IMR-90 (cell line): ENCODE measurements at regions of chr11 and their contacts with region 1.

Region 1: DNA sequence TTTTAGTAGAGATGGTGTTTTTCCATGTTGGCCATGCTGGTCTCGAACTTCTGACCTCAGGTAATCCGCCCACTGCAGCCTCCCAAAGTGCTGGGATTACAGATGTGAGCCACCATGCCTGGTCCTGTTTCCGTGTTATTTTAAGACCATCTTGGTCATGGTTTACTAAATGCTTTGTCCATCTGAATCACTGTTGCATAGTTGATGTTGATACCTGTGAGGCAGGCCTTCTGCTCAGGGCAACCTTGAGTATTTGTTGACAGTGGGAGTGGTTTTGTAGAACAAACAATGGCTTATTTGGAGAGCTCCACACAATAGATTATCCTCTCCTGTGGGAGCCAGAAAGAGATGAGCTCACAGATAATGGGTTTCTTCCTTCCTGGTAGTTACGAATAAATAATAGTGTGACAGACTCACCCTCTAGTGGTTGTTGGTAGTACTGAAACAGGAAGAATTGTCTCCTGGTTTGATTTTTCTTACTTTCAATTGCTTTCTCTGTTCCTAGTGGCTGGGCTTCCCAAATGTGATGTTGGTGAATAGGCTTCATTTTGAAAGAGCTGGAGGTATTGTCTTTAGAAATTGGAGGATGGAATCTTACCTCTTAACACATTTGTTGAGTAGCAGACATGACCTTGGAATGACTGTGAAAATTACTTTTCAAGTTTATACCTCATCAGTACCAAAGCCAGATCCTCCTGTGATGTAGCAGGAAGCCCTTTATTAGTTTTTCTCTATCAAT is 39.0 kb downstream of the CTNND1 start:
- DNase-seq: peak; percentile 74
- ATAC-seq: peak; percentile 80
- H3K4me3 ChIP-seq: no peak overlapping the region
- H3K27ac ChIP-seq: peak overlapping the region; percentile 13; the same call in 1 of the 2 replicates
- H3K4me1 ChIP-seq: peaks cover 3% of the 10 kb centered on the region
- H3K27me3 ChIP-seq: no peaks in the 10 kb centered on the region
- CTCF ChIP-seq: peak; percentile 83
- POLR2A ChIP-seq: no peak
- RAD21 ChIP-seq: peak; percentile 87

Region 2: GRCh38 chr11:57567515-57568329 is 232.9 kb before region 1 on chr11 and contains the start of gene UBE2L6:
- CTCF ChIA-PET with region 1: no interaction called
- POLR2A ChIA-PET with region 1: no interaction called
- dilution Hi-C with region 1: no loop called
- in situ Hi-C with region 1: no loop called
- intact Hi-C with region 1: loop called (anchors 5 kb)
- DNase-seq: no peak
- ATAC-seq: peak; percentile 81
- H3K4me3 ChIP-seq: peak within 1 kb of the TSS; percentile 80
- H3K27ac ChIP-seq: peak within 1 kb of the TSS; percentile 83
- H3K4me1 ChIP-seq: peaks cover 11% of the 10 kb centered on the region
- H3K27me3 ChIP-seq: no peaks in the 10 kb centered on the region
- CTCF ChIP-seq: peak; percentile 39
- POLR2A ChIP-seq: no peak
- RAD21 ChIP-seq: no peak
- total RNA-seq, gene UBE2L6: 34.4 and 37.5 TPM in 2 replicates

Region 3: GRCh38 chr11:57746920-57747319 is 53.7 kb before region 1 on chr11:
- CTCF ChIA-PET with region 1: interaction called, 7 read pairs
- POLR2A ChIA-PET with region 1: interaction called, 3 read pairs
- dilution Hi-C with region 1: no loop called
- in situ Hi-C with region 1: loop called (anchors 5 kb)
- intact Hi-C with region 1: no loop called
- DNase-seq: no peak
- ATAC-seq: no peak
- H3K4me3 ChIP-seq: no peak overlapping the region
- H3K27ac ChIP-seq: no peak overlapping the region
- H3K4me1 ChIP-seq: peaks cover 2% of the 10 kb centered on the region; the same call in 1 of the 2 replicates
- H3K27me3 ChIP-seq: no peaks in the 10 kb centered on the region
- CTCF ChIP-seq: no peak
- POLR2A ChIP-seq: no peak
- RAD21 ChIP-seq: no peak

Region 4: GRCh38 chr11:57761301-57762234 is 39.0 kb before region 1 on chr11 and contains the start of gene CTNND1:
- CTCF ChIA-PET with region 1: interaction called, 10 read pairs
- POLR2A ChIA-PET with region 1: interaction called, 6 read pairs
- dilution Hi-C with region 1: no loop called
- in situ Hi-C with region 1: no loop called
- intact Hi-C with region 1: loop called (anchors 1 kb)
- DNase-seq: peak; percentile 98
- ATAC-seq: peak; percentile 96
- H3K4me3 ChIP-seq: peak within 1 kb of the TSS; percentile 99
- H3K27ac ChIP-seq: peak within 1 kb of the TSS; percentile 100
- H3K4me1 ChIP-seq: peaks cover 8% of the 10 kb centered on the region
- H3K27me3 ChIP-seq: no peaks in the 10 kb centered on the region
- CTCF ChIP-seq: no peak
- POLR2A ChIP-seq: peak; percentile 84; the same call in 1 of the 2 replicates
- RAD21 ChIP-seq: no peak
- total RNA-seq, gene CTNND1: 193 and 229 TPM in 2 replicates

Region 5: DNA sequence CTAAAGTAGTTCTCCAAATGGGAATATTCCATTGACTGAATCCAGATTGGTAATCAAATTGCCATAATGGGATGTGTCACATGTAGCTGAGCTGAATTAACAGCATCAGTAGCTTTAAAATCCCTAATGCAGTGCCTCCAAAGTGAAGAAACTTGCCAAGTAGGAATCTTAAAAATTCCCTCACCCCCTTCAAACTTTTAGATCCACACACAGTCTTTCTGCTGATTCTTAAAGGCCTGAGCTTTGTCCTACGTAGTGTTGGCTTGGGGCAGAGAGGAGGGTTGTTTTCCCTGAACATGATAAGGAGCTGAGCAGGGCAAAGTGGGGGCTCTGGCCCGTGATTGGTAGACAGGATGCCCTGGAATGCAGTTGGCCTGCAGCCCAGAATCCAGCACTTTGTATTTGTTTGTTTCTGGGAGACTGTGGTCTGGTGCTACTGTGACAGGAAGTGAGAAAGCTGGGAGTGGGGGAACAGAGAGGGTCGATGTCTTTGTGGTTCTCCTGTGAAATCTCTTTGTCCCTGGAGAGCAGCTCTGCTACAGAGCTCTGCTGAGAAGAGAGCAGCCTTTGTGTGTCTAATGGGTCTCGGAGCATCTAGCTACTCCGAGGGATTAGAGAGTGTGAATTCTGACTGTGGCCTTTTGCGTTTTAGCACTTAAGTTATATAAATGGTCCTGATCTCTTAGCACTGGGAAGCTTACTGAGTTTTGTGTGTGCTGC is 22.1 kb before region 1 on chr11:
- CTCF ChIA-PET with region 1: interaction called, 11 read pairs
- POLR2A ChIA-PET with region 1: no interaction called
- dilution Hi-C with region 1: no loop called
- in situ Hi-C with region 1: no loop called
- intact Hi-C with region 1: no loop called
- DNase-seq: peak; percentile 98
- ATAC-seq: peak; percentile 88
- H3K4me3 ChIP-seq: peak overlapping the region; percentile 21; the same call in 1 of the 2 replicates
- H3K27ac ChIP-seq: peak overlapping the region; percentile 88
- H3K4me1 ChIP-seq: peaks cover 31% of the 10 kb centered on the region
- H3K27me3 ChIP-seq: no peaks in the 10 kb centered on the region
- CTCF ChIP-seq: no peak
- POLR2A ChIP-seq: no peak; the same call in 1 of the 2 replicates
- RAD21 ChIP-seq: no peak